Endothelial cell of umbilical vein (primary cell): ENCODE measurements at regions of chr15 and their contacts with region 1.

Region 1: GRCh38 chr15:40906091-40906990 is 12.1 kb downstream of the VPS18 start:
- DNase-seq: peak; percentile 98
- H3K4me3 ChIP-seq: peak overlapping the region in 2 of 3 experiments; percentile 9 to 13
- H3K27ac ChIP-seq: peak overlapping the region; percentile 88
- H3K4me1 ChIP-seq: peaks cover 30% of the 10 kb centered on the region
- H3K27me3 ChIP-seq: no peaks in the 10 kb centered on the region
- CTCF ChIP-seq: peak; percentile 89 to 99
- POLR2A ChIP-seq: peak; percentile 67

Region 2: DNA sequence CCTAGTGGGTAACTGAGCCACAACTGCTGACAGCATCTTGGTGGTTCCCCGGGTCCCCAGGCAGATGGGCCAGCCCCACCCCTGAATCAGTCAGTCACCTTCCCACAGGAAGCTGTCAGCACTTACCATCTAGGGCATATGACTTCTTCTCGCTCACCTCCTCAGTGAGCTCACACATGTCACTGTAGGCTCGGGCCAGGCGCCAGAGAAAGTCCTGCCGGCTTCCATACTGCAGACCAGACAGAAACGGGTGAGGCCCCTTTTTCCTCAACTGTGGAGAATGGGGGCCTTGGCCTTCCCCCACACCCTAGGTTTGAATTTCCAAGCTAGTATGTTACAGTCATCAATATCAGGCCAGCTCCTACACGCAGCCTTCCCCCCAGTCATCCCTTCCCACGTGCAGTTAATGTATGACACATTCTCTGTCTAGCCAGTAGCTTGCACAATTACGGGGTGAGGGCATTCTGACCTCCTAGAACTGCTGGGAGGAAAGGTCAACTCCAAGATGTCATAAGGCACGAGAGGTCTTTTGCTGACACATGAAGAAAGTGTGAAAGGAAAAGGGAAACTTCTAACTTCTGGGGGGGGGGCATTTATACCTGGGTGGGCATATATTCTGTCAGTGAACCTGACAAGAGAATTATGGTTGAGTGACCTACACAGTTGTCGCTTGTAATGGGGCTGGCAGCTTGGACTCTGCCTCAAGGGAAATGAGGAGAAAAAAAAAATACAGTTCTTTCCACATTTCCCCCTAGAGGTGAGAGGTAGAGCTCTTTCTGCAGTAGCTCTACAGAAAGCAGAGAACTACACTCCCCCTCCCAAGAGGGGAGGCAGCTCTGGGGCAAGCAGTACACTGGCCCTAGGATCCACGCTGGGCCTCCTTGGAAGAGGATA is 162.2 kb before region 1 on chr15:
- CTCF ChIA-PET with region 1: no interaction called
- POLR2A ChIA-PET with region 1: no interaction called
- dilution Hi-C with region 1: no loop called
- intact Hi-C with region 1: no loop called
- DNase-seq: no peak
- H3K4me3 ChIP-seq: no peak overlapping the region
- H3K27ac ChIP-seq: no peak overlapping the region
- H3K4me1 ChIP-seq: no peaks in the 10 kb centered on the region
- H3K27me3 ChIP-seq: no peaks in the 10 kb centered on the region
- CTCF ChIP-seq: no peak
- POLR2A ChIP-seq: no peak

Region 3: GRCh38 chr15:40881351-40881750 is 25.0 kb before region 1 on chr15:
- CTCF ChIA-PET with region 1: no interaction called
- POLR2A ChIA-PET with region 1: no interaction called
- dilution Hi-C with region 1: no loop called
- intact Hi-C with region 1: no loop called
- DNase-seq: no peak
- H3K4me3 ChIP-seq: no peak overlapping the region
- H3K27ac ChIP-seq: no peak overlapping the region
- H3K4me1 ChIP-seq: no peaks in the 10 kb centered on the region
- H3K27me3 ChIP-seq: no peaks in the 10 kb centered on the region
- CTCF ChIP-seq: no peak
- POLR2A ChIP-seq: no peak

Region 4: GRCh38 chr15:40928821-40929659 is 22.7 kb after region 1 on chr15 and contains the start of gene DLL4:
- CTCF ChIA-PET with region 1: interaction called, 260 read pairs
- POLR2A ChIA-PET with region 1: interaction called, 79 read pairs
- dilution Hi-C with region 1: no loop called
- intact Hi-C with region 1: loop called (anchors 1 kb)
- DNase-seq: peak; percentile 94
- H3K4me3 ChIP-seq: peak within 1 kb of the TSS; percentile 0 to 89 (median 56)
- H3K27ac ChIP-seq: no peak within 1 kb of the TSS
- H3K4me1 ChIP-seq: peaks cover 25% of the 10 kb centered on the region
- H3K27me3 ChIP-seq: peaks cover 14 to 21% of the 10 kb centered on the region in 2 experiments
- CTCF ChIP-seq: peak in 1 of 2 donors; percentile 7
- POLR2A ChIP-seq: peak; percentile 99
- total RNA-seq, gene DLL4: 55.2 and 75.8 TPM in 2 replicates

Region 5: DNA sequence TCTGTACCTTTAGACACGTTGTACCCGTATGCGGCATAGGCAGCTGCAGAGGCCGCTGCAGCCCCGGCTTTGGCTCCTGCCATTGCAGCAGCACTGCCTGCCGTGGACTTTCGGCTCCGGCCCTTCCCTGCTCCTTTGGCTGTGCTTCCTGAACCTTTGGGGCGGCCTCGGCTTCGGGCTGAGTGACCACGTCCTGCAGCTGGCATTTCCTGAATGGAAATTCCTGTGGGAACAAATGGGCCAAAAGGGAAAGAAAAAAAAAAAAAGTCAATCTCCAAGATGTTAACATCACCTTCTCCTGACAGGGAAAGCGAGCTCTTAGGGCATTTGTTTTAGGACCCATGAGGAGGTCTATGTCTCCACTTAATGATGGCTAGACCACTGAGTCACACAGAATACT is 76.5 kb after region 1 on chr15:
- CTCF ChIA-PET with region 1: interaction called, 63 read pairs
- POLR2A ChIA-PET with region 1: interaction called, 4 read pairs
- dilution Hi-C with region 1: no loop called
- intact Hi-C with region 1: loop called (anchors 1 kb)
- DNase-seq: peak; percentile 93
- H3K4me3 ChIP-seq: peak overlapping the region in 1 of 3 experiments; percentile 23
- H3K27ac ChIP-seq: peak overlapping the region; percentile 94
- H3K4me1 ChIP-seq: peaks cover 40% of the 10 kb centered on the region
- H3K27me3 ChIP-seq: no peaks in the 10 kb centered on the region
- CTCF ChIP-seq: peak; percentile 12 to 42
- POLR2A ChIP-seq: peak; percentile 57

Region 6: DNA sequence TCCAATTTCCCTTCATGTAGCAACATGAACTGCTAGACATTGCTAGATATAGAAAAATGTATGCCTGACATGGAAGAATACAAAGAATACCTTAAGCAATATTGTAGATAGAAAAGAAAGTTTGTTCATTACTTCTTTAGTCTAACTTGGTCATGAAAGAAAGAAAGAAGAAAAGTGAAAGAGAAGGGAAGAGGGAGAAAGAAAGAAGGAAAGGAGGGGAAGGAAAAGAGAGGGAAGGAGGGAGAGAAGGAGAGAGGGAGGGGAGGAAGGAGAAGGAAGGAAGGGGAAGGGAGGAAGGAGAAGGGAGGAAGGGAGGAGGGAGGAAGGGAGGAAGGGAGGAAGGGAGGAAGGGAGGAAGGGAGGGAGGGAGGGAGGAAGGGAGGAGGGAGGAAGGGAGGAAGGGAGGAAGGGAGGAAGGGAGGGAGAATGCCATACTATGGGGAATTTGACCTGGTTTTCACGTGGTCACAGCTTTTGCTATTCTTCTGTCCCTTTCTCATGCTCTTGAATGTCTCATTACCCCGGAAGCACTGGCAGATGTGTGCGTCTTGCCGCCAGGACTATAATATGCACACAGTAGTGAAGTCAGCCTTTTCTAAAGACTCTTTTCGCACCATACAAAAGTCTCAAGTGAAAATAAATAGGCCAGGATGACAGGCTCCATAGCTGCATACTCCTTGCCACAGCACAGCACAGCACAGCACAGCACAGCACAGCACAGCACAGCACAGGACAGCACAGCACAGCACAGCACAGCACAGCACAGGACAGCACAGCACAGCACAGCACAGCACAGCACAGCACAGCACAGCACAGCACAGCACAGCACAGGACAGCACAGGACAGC is 125.1 kb after region 1 on chr15:
- CTCF ChIA-PET with region 1: interaction called, 405 read pairs
- POLR2A ChIA-PET with region 1: no interaction called
- dilution Hi-C with region 1: no loop called
- intact Hi-C with region 1: no loop called
- DNase-seq: no peak
- H3K4me3 ChIP-seq: no peak overlapping the region
- H3K27ac ChIP-seq: no peak overlapping the region
- H3K4me1 ChIP-seq: no peaks in the 10 kb centered on the region
- H3K27me3 ChIP-seq: no peaks in the 10 kb centered on the region
- CTCF ChIP-seq: no peak
- POLR2A ChIP-seq: no peak

Region 7: GRCh38 chr15:41180206-41180789 is 274.0 kb after region 1 on chr15:
- CTCF ChIA-PET with region 1: interaction called, 140 read pairs
- POLR2A ChIA-PET with region 1: no interaction called
- dilution Hi-C with region 1: no loop called
- intact Hi-C with region 1: loop called (anchors 1 kb)
- DNase-seq: no peak
- H3K4me3 ChIP-seq: no peak overlapping the region
- H3K27ac ChIP-seq: no peak overlapping the region
- H3K4me1 ChIP-seq: no peaks in the 10 kb centered on the region
- H3K27me3 ChIP-seq: no peaks in the 10 kb centered on the region
- CTCF ChIP-seq: no peak
- POLR2A ChIP-seq: no peak

Region 8: DNA sequence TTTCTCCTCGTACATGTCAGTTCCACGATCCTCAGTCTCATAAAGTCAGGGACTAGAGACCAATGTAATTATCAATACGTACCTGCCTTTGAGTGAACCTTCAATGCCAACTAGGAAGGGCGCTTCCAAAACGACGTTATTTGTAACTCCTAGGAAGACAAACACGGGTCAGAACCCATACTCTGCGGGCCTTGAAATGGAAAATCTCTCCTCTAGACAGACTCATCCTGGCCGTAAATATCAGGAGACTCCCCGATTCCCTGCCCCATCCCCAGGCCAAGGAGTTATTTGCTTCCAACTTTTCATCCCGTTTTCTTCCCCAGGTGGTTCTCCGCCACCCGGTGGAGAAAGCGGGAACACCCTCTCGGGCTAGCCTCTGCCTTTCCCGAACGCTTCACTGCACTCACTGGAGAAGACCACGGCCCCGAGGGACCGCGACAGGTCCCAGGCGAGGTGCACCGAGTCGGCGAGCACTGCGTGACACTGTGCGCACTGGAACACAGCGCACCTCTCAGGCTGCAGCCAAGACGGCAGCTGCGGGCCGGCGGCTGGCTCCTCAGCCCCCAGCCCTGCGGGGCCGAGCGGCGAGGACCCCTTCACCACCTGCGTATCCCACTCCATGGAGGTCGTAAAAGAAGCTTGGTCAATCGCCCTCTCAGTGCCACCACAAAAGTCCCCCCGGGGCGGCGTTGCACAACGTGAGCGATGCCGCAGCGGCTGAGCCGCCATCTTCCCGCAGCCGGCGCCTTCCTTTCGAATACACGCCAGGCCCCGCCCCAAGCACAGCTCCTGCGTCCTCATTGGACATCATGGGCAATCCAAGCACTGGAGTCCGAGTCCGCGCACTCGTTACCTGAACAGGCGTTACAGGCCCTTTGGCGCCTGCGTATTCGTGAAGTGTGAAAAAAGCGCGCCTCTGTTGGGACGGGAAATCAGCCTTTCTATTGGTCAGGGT is 425.8 kb after region 1 on chr15 and contains the start of gene OIP5:
- CTCF ChIA-PET with region 1: interaction called, 8 read pairs
- POLR2A ChIA-PET with region 1: no interaction called
- dilution Hi-C with region 1: no loop called
- intact Hi-C with region 1: loop called (anchors 2 kb)
- DNase-seq: peak; percentile 100
- H3K4me3 ChIP-seq: peak within 1 kb of the TSS; percentile 63 to 94 (median 93)
- H3K27ac ChIP-seq: peak within 1 kb of the TSS; percentile 73
- H3K4me1 ChIP-seq: peaks cover 24% of the 10 kb centered on the region
- H3K27me3 ChIP-seq: no peaks in the 10 kb centered on the region
- CTCF ChIP-seq: peak; percentile 55 to 72
- POLR2A ChIP-seq: peak; percentile 88
- total RNA-seq, gene OIP5: 9.2 and 11.4 TPM in 2 replicates